ENCODE measurements at regions of chr17 and their contacts with region 1.

Region 1: GRCh38 chr17:68435876-68436842 is 21.1 kb downstream of the WIPI1 start:
- DNase-seq: peak in 7 of 10 donors; percentile 61 to 91 (median 69)

Region 2: GRCh38 chr17:68172461-68172954 is 263.7 kb before region 1 on chr17:
- intact Hi-C with region 1: loop called (anchors 10 kb)
- DNase-seq: peak in 8 of 10 donors; percentile 52 to 93 (median 76)

Region 3: GRCh38 chr17:68260051-68260762 is 176.0 kb before region 1 on chr17:
- intact Hi-C with region 1: loop called (anchors 5 kb)
- DNase-seq: no peak

Region 4: GRCh38 chr17:68377862-68378770 is 58.0 kb before region 1 on chr17:
- intact Hi-C with region 1: no loop called
- DNase-seq: peak in 9 of 10 donors; percentile 13 to 81 (median 34)

Region 5: DNA sequence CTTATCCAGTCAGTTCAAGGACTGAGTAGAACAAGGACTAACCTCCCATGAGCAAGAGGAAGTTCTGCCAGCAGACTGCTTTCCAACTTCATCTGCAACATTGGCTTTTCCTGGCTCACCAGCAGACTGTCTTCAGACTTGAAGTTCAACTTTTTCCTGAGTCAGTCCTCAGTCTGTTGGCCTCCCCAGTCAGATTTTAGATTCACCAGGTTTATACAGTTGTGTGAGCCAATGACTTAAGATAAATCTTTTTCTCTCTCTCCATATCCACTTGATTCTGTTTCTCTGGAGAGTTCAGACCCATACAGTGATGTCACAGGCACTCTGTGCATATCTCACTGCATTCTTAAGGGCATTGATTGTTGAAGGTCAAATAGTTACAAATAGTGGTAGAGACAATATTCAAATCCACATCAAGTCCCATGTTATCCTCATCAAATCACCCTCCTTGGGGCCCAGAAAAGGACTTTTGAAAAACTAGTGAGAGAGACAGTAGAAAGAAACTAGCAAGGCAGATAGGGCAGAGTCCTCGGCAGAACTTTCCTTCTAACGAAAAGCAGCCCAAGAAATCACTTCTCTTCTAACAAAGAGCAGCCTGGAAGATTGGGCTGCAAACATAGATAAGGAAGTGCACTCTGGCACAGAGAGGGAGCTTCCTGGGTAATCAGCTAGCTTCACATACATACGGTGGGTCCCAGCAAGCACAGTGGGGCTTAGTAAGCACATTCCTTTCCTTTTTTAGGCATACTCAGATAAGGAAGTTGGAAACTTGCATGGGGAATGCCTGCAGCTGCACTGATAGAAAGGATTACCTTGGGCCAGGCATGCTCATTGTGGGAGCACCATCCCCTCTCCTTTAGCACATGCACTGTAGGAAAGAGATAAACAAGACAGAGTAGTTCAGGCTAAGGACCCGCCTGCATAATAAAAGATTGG is 297.4 kb after region 1 on chr17:
- intact Hi-C with region 1: no loop called
- DNase-seq: no peak

Measured in posterior cingulate gyrus (tissue), 11 donors.